GM10248 (cell line): ENCODE measurements at regions of chr6 and their contacts with region 1.

Region 1: GRCh38 chr6:63598049-63599036 is 26.1 kb downstream of the LOC128125822 start:
- DNase-seq: peak; percentile 80
- CTCF ChIP-seq: peak; percentile 81

Region 2: DNA sequence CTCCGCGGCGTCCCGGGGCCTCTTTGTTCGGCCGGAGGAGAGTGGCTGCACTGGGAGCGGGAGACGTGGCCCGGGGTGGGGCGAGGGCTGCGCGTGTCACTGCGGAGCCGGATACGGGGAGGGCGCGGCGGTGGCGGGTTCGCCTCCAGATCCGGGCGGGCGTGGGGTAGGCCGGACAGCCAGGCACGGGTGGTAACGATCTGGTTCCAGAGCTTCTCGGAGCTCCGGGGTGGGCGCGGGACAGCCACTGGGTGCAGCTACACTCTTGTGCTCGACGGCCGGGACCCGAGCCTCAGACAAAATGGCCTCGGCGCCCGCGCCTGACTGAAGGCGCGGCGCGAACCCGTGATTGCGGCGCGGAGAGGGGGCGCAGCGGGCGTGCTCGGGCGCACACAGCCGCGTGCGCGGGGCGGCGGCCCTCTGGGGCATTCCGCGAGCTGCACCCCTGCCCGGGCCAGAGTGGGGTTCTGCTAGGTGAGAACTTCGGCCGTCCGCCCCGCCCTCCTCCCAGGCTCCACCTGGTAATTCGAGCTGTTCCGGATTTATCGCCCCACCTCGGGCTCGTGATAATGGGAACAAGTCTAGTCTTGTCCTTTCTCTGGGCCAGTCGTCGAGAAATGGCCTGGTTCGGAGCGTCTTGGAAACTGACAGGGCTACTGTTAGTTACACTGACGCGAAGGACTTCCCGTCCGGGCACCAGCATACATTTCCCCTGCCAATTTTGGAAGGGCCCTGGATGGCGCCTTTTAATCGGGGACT is 25.0 kb before region 1 on chr6:
- CTCF ChIA-PET with region 1: interaction called, 15 read pairs
- POLR2A ChIA-PET with region 1: interaction called, 3 read pairs
- DNase-seq: peak; percentile 62
- CTCF ChIP-seq: no peak

Region 3: GRCh38 chr6:63609231-63609630 is 10.9 kb after region 1 on chr6:
- CTCF ChIA-PET with region 1: interaction called, 55 read pairs
- POLR2A ChIA-PET with region 1: no interaction called
- DNase-seq: no peak
- CTCF ChIP-seq: no peak

Region 4: DNA sequence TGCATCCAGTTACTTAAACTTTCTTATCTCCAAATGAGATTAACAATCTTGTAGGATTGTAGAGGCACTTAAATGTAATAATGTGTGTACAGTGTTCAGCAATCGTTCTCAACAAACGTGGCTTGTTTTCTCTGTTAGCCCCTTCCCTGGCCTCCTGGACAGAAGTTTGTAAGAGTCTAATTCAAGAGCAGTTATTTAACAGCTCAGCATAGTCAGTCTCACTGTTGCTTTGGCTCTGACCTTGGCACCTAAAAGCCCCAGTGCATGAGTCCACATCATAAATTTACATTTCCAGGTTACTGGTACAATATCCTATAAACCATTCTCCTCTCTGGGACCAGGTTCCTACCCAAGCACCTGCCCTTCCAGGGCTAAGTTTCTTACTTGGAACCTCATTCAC is 25.7 kb after region 1 on chr6:
- CTCF ChIA-PET with region 1: interaction called, 18 read pairs
- POLR2A ChIA-PET with region 1: no interaction called
- DNase-seq: no peak
- CTCF ChIP-seq: no peak

Region 5: DNA sequence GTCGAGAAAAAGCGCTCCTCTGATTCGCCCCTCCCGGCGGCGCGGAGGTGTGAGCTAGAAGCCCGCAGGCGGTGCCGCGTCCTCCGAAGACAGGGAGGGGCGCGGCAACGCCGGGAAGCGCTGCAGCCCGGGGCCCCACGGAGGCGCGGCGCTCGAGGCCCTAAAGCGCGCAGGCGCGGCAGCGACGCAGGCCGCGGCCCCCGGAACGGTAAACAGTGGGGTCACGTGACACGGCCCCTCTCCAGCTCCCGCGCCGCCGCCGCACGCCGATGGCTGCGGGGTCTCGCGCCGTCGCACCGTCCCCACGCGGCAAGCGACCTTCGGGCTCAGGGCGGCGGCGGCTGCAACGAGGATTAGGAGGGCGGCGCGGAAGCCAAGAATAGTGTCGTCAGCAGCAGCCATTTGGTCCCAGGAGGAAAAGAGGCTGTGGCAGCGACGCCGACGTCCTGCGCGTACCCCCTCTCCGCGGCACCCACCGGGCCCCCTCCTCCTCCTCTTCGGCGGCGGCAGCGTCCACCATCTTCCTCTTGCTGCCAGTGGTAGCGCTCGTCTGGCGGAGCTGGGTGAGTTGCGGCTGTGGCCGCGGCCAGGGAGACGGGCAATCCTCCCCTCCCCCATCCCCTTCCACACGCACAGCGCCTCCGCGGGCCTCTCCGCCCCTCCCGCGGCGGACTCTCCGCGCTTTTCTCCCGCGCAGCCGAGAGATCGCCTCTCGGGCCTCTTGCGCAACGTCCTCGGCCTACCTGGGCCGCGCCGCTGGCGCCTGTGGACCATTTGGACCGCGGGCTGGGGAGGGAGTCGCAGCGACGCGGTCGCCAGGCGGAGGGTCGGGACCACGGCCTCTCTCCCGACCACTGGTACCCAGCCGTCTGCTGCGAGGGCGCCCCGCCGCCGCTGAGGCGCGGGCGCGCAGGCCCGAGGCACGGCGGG is 37.5 kb after region 1 on chr6 and contains the start of gene PHF3:
- CTCF ChIA-PET with region 1: interaction called, 15 read pairs
- POLR2A ChIA-PET with region 1: no interaction called
- DNase-seq: peak; percentile 96
- CTCF ChIP-seq: no peak

Region 6: GRCh38 chr6:63714091-63714490 is 115.7 kb after region 1 on chr6:
- CTCF ChIA-PET with region 1: interaction called, 12 read pairs
- POLR2A ChIA-PET with region 1: no interaction called
- DNase-seq: no peak
- CTCF ChIP-seq: no peak

Region 7: DNA sequence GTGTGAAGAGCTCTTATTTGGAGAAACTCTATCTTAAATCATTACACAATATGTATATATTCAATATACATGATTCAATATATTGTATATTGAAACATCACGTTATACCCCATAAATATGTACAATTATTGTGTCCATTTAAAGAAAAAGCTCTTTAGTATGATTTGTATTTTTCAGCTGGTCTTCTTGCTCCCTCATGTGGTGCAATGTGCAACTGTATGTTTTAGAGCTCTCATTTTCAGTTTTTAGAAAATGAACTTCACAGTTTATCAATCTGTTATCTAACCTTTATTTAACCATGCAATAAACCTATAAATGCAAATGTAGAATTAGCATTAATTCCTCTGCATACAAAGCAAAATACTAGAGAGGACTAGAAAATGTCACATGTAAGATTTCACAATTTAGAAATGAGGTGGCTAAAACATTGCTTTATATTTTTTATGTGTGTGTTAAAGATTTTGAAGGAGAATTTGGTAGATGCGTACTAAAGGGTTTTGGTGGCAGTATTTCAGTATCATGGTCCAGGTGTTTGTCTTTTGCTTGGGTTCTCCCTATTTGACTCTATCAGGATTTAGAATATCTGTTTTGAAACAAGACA is 204.4 kb after region 1 on chr6:
- CTCF ChIA-PET with region 1: interaction called, 40 read pairs
- POLR2A ChIA-PET with region 1: no interaction called
- DNase-seq: peak; percentile 23
- CTCF ChIP-seq: peak; percentile 61